Right ventricle myocardium inferior (tissue), 1 donor: ENCODE measurements at regions of chr12 and their contacts with region 1.

Region 1: DNA sequence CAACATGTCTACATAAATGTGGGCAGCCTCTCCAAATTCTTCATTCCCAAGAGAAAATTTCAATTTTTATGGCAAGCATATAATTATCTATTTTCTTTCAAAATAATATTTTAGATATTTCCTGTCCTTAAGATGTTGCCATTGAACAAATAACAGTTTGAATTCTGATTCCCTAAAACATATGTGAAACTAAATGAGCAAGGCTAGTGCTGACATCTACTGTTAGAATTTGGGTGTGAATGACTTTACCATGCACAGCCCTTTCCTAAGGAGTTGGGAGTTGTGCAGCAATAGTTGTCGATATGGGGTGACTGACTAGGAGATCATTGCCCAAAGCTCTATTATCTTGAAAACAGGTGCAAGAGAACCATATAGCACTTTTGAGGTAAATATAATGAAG is 108.2 kb upstream of the SLC38A4 start:
- DNase-seq: no peak
- ATAC-seq: peak; percentile 59

Region 2: GRCh38 chr12:46124848-46125619 is 808.9 kb before region 1 on chr12:
- intact Hi-C with region 1: loop called (anchors 10 kb)
- DNase-seq: no peak
- ATAC-seq: peak; percentile 90

Region 3: DNA sequence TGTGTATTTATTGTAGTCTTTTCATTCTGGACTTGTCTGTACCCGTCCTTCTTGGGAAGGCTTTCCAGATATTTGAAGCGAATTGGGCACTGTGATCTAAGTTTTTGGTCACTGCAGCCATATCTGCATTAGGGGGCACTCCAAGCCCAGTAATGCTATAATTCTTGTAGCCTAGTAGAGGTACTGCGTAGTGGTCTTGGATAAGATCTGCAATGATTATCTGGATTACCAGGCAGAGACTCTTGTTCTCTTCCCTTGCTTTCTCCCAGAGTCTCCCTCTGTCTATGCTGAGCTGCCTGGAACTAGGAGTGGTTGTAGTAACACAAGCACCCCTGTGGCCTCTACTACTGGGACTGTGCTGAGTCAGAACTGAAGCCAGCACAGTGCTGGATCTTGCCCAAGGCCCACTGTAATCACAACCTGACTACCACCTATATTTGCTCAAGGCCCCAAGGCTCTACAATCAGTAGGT is 591.3 kb before region 1 on chr12:
- intact Hi-C with region 1: loop called (anchors 5 kb)
- DNase-seq: no peak
- ATAC-seq: peak; percentile 76

Region 4: DNA sequence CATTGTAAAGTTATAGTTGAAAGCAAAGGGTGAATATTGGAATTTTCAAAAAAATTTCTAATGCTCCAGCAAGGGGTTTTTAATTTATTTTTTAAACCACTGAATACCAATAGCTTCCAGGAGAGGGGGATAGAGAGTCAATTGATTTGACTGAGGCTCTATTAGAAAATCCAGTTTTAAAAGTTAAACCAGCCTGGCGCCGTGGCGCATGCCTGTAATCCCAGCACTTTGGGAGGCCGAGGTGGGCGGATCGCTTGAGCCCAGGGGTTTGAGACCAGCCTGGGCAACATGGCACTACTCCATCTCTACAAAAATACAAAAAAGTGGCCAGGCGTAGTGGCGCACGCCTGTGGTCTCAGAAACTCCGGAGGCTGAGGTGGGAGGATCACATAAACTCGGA is 258.2 kb before region 1 on chr12:
- intact Hi-C with region 1: loop called (anchors 2 kb)
- DNase-seq: no peak
- ATAC-seq: no peak

Region 5: DNA sequence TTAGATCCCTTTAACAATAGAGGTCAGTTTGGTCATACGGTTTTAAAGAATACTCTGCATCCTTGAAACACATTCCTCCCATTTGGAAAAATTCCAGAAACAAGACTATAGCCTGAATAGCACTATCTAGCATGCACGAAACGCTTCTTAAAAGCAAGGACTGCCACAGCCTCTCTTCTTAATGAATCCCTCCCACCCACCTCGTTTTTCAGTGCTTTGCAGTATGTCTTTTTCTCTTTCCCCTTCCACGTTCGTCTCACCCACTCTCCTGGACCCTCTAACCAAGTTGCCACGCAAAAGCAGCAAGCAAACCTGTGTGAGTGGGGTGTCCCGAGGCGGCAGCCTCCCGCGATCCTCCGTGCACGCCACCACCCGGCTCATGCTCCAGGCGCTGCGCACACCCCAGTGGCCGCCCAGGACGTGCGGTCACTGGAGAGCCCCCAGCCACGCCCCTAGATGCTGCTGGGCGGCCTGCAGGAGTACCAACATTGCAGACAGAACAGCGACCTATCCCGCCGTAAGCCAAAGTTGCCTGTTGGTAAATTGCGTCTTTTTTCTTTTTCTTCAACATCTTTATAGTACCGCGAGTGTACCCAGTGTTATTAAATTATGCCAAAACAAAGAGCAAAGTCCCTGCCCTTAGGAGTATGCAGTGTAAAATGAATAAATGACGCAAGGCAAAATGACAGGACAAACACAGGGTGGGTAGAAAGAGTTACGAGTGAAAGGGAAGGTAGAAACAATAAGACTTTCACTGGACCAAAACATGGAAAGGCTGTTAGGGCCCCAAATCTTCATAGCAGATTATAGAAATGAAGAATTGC is 108.1 kb before region 1 on chr12 and contains the start of gene SLC38A4:
- intact Hi-C with region 1: loop called (anchors 10 kb)
- DNase-seq: peak; percentile 71
- ATAC-seq: peak; percentile 95
- total RNA-seq, gene SLC38A4: 2.8 TPM